Endothelial cell of umbilical vein (primary cell): ENCODE measurements at regions of chr10 and their contacts with region 1.

Region 1: DNA sequence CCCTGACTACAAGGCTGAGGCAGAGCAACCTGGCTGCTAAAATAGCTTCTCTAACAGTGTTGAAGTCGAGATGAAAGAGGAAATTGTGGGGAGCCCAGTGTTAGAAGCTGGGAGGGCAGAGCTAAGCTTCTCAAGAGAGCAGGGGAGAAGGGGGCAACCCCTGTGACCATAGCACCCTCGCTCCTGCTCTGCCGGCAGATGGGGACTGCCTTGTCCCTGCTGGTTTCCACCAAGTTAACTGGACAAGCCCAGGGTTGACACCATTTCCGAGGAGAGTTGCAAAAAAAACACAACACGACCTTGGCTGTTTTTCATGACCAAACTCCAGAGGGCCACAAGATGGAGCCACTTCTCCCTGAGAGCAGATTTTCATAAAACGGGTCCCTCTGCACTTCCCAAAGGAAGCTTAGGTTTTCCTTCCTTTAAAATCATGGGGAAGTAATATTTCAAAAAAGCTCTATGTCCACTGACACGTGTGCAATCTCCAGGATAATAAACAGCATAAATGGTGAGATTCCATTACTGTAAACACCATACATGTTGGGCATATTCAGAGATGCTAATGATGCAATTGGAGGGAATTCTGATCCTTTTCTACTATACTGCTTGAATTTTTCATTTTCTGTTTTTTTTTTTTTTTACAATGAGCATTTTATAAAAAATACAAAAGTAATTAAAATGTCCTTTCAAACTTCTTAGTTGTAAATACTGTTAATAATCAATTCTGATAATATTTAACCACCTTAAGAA is 140.4 kb downstream of the PIP4K2A start:
- DNase-seq: peak; percentile 18
- H3K4me3 ChIP-seq: no peak overlapping the region
- H3K27ac ChIP-seq: no peak overlapping the region
- H3K4me1 ChIP-seq: no peaks in the 10 kb centered on the region
- H3K27me3 ChIP-seq: no peaks in the 10 kb centered on the region
- CTCF ChIP-seq: peak; percentile 44 to 52
- POLR2A ChIP-seq: no peak

Region 2: DNA sequence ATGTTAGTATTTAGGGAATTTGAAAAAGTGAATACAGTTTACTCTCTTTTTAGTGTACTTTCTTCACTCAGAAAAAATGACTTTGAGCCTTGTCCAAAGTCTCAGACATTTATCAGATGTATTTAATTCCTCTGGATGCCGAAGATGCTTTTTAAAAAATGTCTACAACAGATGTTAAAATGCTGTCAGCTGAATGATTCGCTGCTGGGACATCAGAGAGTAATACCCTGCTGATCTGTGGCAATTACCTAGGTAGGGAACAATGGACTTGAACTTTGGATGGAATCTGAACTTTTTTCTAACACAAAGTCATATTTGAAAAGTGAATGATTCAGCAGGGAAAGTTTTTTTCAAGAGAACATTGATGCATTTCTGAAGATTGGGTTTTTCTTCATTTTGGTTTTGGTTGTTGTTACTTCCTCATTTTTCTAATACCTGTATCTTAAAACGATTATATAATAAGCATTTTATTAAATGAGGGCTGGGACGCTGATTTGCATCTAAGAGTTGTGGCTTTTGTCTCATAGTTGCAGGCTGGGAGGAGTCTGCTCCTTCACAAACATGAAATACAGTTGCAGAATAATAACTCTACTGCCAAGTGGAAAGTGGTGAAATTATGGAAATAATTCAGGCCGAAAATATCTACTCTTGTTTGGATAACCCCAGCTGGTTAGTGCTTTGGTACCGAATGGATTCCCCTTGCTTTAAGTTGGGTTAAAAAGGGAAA is 130.7 kb before region 1 on chr10:
- CTCF ChIA-PET with region 1: no interaction called
- POLR2A ChIA-PET with region 1: no interaction called
- dilution Hi-C with region 1: no loop called
- intact Hi-C with region 1: no loop called
- DNase-seq: no peak
- H3K4me3 ChIP-seq: no peak overlapping the region
- H3K27ac ChIP-seq: no peak overlapping the region
- H3K4me1 ChIP-seq: peaks cover 4% of the 10 kb centered on the region
- H3K27me3 ChIP-seq: peaks cover 11 to 35% of the 10 kb centered on the region in 2 experiments
- CTCF ChIP-seq: no peak
- POLR2A ChIP-seq: no peak

Region 3: GRCh38 chr10:22606164-22606614 is 32.2 kb after region 1 on chr10:
- CTCF ChIA-PET with region 1: no interaction called
- POLR2A ChIA-PET with region 1: no interaction called
- dilution Hi-C with region 1: no loop called
- intact Hi-C with region 1: no loop called
- DNase-seq: peak; percentile 14
- H3K4me3 ChIP-seq: no peak overlapping the region
- H3K27ac ChIP-seq: no peak overlapping the region
- H3K4me1 ChIP-seq: peaks cover 3% of the 10 kb centered on the region
- H3K27me3 ChIP-seq: no peaks in the 10 kb centered on the region
- CTCF ChIP-seq: no peak
- POLR2A ChIP-seq: no peak

Region 4: DNA sequence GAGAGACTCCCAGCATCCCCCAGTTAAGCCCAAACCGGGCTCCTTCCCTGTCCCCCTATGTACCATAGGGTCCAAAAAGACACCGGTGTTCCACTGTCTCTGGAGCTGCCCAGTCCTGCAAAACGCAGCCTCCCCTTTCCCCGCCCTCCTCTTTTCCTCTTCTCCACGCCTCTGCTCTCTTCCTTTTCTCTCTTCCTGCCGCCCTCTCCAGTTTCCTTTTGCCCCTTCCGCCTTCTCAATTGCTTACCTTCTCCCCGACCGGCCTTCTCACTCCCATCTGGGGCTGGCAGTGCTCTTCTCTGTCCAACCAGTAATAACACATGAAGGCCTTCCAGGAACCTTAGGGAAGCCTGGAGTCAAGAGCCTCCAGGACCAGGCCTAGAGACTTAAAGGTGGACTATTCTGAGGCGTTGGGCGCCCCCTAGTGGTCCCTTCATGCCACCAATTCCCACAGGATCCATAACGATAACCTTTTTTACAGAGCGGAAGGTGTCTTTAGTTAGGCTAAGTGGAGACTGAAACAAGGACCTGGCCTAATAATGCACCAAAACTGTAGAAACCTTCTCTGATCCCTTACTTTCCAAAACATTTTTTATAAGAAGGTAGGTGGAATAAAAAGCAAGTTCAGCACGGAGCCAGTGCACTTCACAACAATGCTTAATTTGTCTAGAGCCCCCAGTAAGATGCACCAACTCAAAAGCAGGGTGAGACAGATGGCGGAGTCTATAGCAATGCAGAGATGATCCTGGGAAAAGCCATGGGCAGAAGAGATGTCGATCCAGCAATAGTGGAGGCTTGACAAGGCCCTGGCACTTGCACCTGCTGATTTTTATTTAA is 494.2 kb after region 1 on chr10:
- CTCF ChIA-PET with region 1: interaction called, 3 read pairs
- POLR2A ChIA-PET with region 1: no interaction called
- dilution Hi-C with region 1: no loop called
- intact Hi-C with region 1: loop called (anchors 5 kb)
- DNase-seq: peak; percentile 65
- H3K4me3 ChIP-seq: no peak overlapping the region
- H3K27ac ChIP-seq: no peak overlapping the region
- H3K4me1 ChIP-seq: no peaks in the 10 kb centered on the region
- H3K27me3 ChIP-seq: no peaks in the 10 kb centered on the region
- CTCF ChIP-seq: peak; percentile 70 to 83
- POLR2A ChIP-seq: no peak